K562 (cell line): ENCODE measurements at regions of chr16 and their contacts with region 1.

Region 1: GRCh38 chr16:89330177-89330856 is 112.8 kb downstream of the ZNF778 start:
- DNase-seq: peak in 3 of 4 experiments; percentile 39 to 51 (median 48)
- ATAC-seq: no peak
- H3K4me3 ChIP-seq: no peak overlapping the region
- H3K27ac ChIP-seq: peak overlapping the region; percentile 57; the same call in 2 of the 3 replicates
- H3K4me1 ChIP-seq: peaks cover 40 to 69% of the 10 kb centered on the region in 2 experiments
- H3K27me3 ChIP-seq: no peaks in the 10 kb centered on the region
- CTCF ChIP-seq: no peak
- EP300 ChIP-seq: no peak
- POLR2A ChIP-seq: no peak
- RAD21 ChIP-seq: no peak

Region 2: GRCh38 chr16:89009311-89010209 is 320.8 kb before region 1 on chr16:
- CTCF ChIA-PET with region 1: no interaction called
- POLR2A ChIA-PET with region 1: no interaction called
- in situ Hi-C with region 1: no loop called
- intact Hi-C with region 1: no loop called
- DNase-seq: peak in 3 of 4 experiments; percentile 68 to 77 (median 71)
- ATAC-seq: peak; percentile 55
- H3K4me3 ChIP-seq: no peak overlapping the region
- H3K27ac ChIP-seq: no peak overlapping the region
- H3K4me1 ChIP-seq: peaks cover 2 to 38% of the 10 kb centered on the region in 2 experiments; a peak in 4 of 5 replicates
- H3K27me3 ChIP-seq: peaks cover 0 to 16% of the 10 kb centered on the region in 2 experiments; a peak in 3 of 5 replicates
- CTCF ChIP-seq: no peak
- EP300 ChIP-seq: no peak
- POLR2A ChIP-seq: no peak
- RAD21 ChIP-seq: 0 out of 4 replicates have a peak, but pooled peaks of 1 of the 2 experiments have one; percentile 8

Region 3: GRCh38 chr16:89104930-89105571 is 225.3 kb before region 1 on chr16:
- CTCF ChIA-PET with region 1: no interaction called
- POLR2A ChIA-PET with region 1: no interaction called
- in situ Hi-C with region 1: no loop called
- intact Hi-C with region 1: no loop called
- DNase-seq: no peak
- ATAC-seq: no peak
- H3K4me3 ChIP-seq: no peak overlapping the region
- H3K27ac ChIP-seq: no peak overlapping the region
- H3K4me1 ChIP-seq: peaks cover 0 to 20% of the 10 kb centered on the region in 2 experiments; a peak in 2 of 5 replicates
- H3K27me3 ChIP-seq: no peaks in the 10 kb centered on the region
- CTCF ChIP-seq: no peak
- EP300 ChIP-seq: no peak
- POLR2A ChIP-seq: no peak
- RAD21 ChIP-seq: no peak

Region 4: GRCh38 chr16:89300311-89300975 is 29.9 kb before region 1 on chr16:
- CTCF ChIA-PET with region 1: no interaction called
- POLR2A ChIA-PET with region 1: no interaction called
- in situ Hi-C with region 1: no loop called
- intact Hi-C with region 1: no loop called
- DNase-seq: no peak
- ATAC-seq: no peak
- H3K4me3 ChIP-seq: no peak overlapping the region
- H3K27ac ChIP-seq: no peak overlapping the region
- H3K4me1 ChIP-seq: peaks cover 0 to 45% of the 10 kb centered on the region in 2 experiments; a peak in 2 of 5 replicates
- H3K27me3 ChIP-seq: no peaks in the 10 kb centered on the region
- CTCF ChIP-seq: no peak
- EP300 ChIP-seq: no peak
- POLR2A ChIP-seq: no peak
- RAD21 ChIP-seq: no peak

Region 5: DNA sequence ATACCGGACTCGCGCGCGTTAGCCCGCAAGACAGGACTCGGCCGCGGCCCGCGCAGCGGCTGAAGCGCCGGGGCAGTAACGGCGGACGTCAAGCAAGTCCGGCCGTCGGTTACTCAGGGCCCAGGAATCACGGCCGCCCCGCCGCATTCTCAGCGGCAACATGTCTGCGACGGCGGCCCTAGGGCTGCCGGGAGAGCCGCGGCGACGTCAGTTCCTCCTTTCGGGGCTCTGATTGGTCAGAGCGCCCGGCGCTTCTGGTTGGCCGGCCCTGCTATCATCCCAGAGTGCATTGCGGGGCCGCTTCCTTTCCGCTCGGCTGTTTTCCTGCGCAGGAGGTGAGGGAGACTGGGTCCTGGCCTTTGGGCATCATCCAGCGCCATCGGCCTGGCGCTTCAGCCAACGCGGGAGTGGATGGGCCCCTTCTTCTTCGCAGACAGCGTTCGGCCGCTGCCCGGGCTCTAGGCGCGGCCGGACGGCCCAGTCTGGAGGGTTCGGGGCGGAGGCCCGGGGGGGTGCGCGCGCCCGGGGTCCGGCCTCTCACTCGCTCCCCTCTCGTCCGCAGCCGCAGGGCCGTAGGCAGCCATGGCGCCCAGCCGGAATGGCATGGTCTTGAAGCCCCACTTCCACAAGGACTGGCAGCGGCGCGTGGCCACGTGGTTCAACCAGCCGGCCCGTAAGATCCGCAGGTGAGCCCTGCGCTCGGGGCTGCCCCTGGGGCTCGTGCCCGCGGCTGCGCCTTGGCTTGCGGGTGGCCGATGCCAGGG is 230.2 kb after region 1 on chr16 and contains the start of gene RPL13:
- CTCF ChIA-PET with region 1: no interaction called
- POLR2A ChIA-PET with region 1: interaction called, 4 read pairs
- in situ Hi-C with region 1: no loop called
- intact Hi-C with region 1: loop called (anchors 2 kb)
- DNase-seq: peak; percentile 93 to 97 (median 95)
- ATAC-seq: peak; percentile 85
- H3K4me3 ChIP-seq: peak within 1 kb of the TSS; percentile 84
- H3K27ac ChIP-seq: peak within 1 kb of the TSS; percentile 94
- H3K4me1 ChIP-seq: peaks cover 35 to 62% of the 10 kb centered on the region in 2 experiments; a peak in 4 of 5 replicates
- H3K27me3 ChIP-seq: no peaks in the 10 kb centered on the region; a peak in 1 of 5 replicates
- CTCF ChIP-seq: peak in 1 of 3 experiments; percentile 12; a peak in 1 of 6 replicates
- EP300 ChIP-seq: no peak
- POLR2A ChIP-seq: peak; percentile 99
- RAD21 ChIP-seq: no peak
- polyA plus RNA-seq, gene RPL13: 227 to 348 TPM